Aorta (tissue), 5 donors: ENCODE measurements at regions of chr9 and their contacts with region 1.

Region 1: DNA sequence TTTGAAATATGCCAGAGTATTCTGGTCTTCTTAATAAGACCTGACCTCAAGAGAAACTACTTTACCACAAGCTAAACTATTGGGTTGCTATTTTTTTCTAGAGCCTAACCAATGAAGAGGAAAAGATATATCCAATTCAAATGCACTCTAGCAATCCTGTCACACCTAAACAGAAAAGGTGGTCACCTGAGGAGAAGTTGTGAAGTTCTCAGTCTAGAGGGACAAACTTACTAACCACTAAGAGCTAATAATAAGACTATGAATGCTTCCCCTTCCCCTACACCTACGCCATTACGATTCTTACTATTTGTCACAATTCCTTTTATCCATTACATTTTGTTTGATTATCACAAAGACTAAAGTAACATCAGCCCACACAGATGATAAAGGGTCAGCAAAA is 29.7 kb downstream of the RLN2 start:
- DNase-seq: no peak
- ATAC-seq: no peak
- H3K4me3 ChIP-seq: no peak overlapping the region
- H3K27ac ChIP-seq: no peak overlapping the region
- H3K4me1 ChIP-seq: no peaks in the 10 kb centered on the region
- H3K27me3 ChIP-seq: no peaks in the 10 kb centered on the region

Region 2: DNA sequence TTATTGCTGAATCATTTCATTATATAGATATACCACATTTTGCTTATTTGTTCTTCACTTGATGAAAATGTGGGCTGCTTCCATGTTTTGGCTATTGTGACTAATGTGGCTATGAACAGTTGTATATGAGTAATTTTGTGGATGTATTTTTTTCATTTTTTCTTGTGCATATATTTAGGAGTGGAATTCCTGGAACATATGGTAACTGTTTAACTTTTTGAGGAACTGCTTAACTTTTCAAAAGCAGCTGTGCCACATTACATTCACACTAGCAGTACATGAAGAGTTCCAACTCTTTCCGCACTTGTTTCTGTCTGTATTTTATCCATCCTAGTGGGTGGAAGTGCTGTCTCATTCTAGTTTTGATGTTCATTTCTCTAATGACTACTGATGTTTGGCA is 221.9 kb before region 1 on chr9:
- intact Hi-C with region 1: loop called in 1 of 2 experiments (anchors 5 kb)
- DNase-seq: no peak
- ATAC-seq: no peak
- H3K4me3 ChIP-seq: no peak overlapping the region
- H3K27ac ChIP-seq: no peak overlapping the region
- H3K4me1 ChIP-seq: peaks cover 0 to 3% of the 10 kb centered on the region in 2 donors
- H3K27me3 ChIP-seq: no peaks in the 10 kb centered on the region

Region 3: GRCh38 chr9:5231212-5231611 is 43.6 kb before region 1 on chr9 and contains the start of gene INSL4:
- intact Hi-C with region 1: no loop called
- DNase-seq: no peak
- ATAC-seq: no peak
- H3K4me3 ChIP-seq: no peak within 1 kb of the TSS
- H3K27ac ChIP-seq: no peak within 1 kb of the TSS
- H3K4me1 ChIP-seq: no peaks in the 10 kb centered on the region
- H3K27me3 ChIP-seq: no peaks in the 10 kb centered on the region
- total RNA-seq, gene INSL4: not detected